Activated CD8-positive, alpha-beta T cell treated with anti-CD3 and anti-CD28 coated beads for 36 hours (primary cell): ENCODE measurements at regions of chr12 and their contacts with region 1.

Region 1: DNA sequence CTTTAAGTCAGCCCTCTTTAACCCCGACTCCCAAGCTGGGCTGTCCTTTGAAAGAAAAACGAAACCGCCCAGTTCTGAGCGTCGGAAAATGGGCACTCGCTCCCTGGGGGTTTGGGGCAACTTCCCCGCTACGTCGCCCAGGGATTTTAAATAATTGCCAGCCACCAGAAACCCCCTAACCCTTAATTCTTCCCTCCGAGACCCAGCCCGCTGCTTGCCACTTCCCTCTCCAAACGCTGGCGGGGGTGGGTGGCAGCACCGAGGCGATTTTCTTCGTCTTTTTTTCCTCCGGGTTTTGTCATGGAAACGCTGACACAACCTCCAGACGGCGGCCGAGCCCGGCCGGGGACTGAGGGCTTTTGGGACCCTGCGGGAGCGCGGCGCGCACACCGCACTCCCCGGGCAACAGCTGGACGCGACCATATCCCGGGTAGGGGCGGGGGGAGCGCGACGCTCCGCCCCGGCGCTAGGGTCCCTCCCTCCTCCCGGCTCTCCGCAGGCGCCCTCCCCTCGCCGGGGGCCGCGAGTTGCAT is at the start of gene CHST11:
- DNase-seq: peak; percentile 89
- ATAC-seq: peak; percentile 83
- H3K4me3 Mint-ChIP-seq: peak within 1 kb of the TSS; percentile 83
- H3K27ac Mint-ChIP-seq: peak within 1 kb of the TSS; percentile 97
- H3K4me1 Mint-ChIP-seq: peaks cover 40% of the 10 kb centered on the region
- H3K27me3 Mint-ChIP-seq: no peaks in the 10 kb centered on the region
- CTCF ChIP-seq: peak; percentile 20
- total RNA-seq, gene CHST11: 30.9 to 33.9 TPM

Region 2: DNA sequence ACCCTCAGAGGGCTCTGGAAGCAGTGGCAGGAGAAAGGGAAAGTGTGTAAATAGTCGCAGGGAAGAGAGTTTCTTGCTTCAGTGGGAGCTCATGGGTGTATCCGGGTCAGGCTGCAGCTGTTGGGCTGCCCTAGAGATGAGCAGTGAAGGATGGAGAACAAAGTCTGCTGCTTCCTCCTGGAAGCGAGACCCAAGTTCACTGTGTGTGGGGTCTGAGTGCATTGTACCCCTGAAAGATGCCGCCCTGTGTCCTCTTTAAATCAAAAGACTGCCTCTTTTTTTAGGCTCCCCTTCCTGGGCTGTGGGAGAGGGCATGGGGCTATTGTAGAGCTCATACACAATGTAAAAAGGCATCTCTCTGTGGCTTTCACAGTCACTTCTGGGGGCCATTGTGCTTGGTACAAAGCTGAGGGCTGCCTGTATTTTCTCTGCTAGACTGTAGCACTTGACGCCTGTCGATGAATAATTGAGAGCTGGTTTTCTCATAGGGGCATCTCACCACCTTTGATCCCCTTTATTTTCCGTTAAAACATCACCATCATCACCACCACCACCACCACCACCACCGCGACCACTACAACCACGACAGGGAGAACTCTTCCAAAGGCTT is 17.0 kb after region 1 on chr12:
- CTCF ChIA-PET with region 1: interaction called, 28 read pairs
- POLR2A ChIA-PET with region 1: interaction called, 30 read pairs
- intact Hi-C with region 1: no loop called
- DNase-seq: peak; percentile 48
- ATAC-seq: peak; percentile 57
- H3K4me3 Mint-ChIP-seq: peak overlapping the region; percentile 52
- H3K27ac Mint-ChIP-seq: peak overlapping the region; percentile 74
- H3K4me1 Mint-ChIP-seq: peaks cover 81% of the 10 kb centered on the region
- H3K27me3 Mint-ChIP-seq: no peaks in the 10 kb centered on the region
- CTCF ChIP-seq: no peak

Region 3: GRCh38 chr12:104478396-104479122 is 22.1 kb after region 1 on chr12:
- CTCF ChIA-PET with region 1: interaction called, 28 read pairs
- POLR2A ChIA-PET with region 1: interaction called, 30 read pairs
- intact Hi-C with region 1: no loop called
- DNase-seq: no peak
- ATAC-seq: peak; percentile 70
- H3K4me3 Mint-ChIP-seq: peak overlapping the region; percentile 70
- H3K27ac Mint-ChIP-seq: peak overlapping the region; percentile 95
- H3K4me1 Mint-ChIP-seq: peaks cover 84% of the 10 kb centered on the region
- H3K27me3 Mint-ChIP-seq: no peaks in the 10 kb centered on the region
- CTCF ChIP-seq: no peak

Region 4: GRCh38 chr12:104494137-104494792 is 37.8 kb after region 1 on chr12:
- CTCF ChIA-PET with region 1: interaction called, 7 read pairs
- POLR2A ChIA-PET with region 1: interaction called, 21 read pairs
- intact Hi-C with region 1: loop called (anchors 5 kb)
- DNase-seq: peak; percentile 89
- ATAC-seq: peak; percentile 70
- H3K4me3 Mint-ChIP-seq: peak overlapping the region; percentile 63
- H3K27ac Mint-ChIP-seq: peak overlapping the region; percentile 84
- H3K4me1 Mint-ChIP-seq: peaks cover 83% of the 10 kb centered on the region
- H3K27me3 Mint-ChIP-seq: no peaks in the 10 kb centered on the region
- CTCF ChIP-seq: no peak

Region 5: GRCh38 chr12:104569346-104570173 is 113.1 kb after region 1 on chr12:
- CTCF ChIA-PET with region 1: interaction called, 17 read pairs
- POLR2A ChIA-PET with region 1: no interaction called
- intact Hi-C with region 1: loop called (anchors 2 kb)
- DNase-seq: peak; percentile 86
- ATAC-seq: peak; percentile 83
- H3K4me3 Mint-ChIP-seq: peak overlapping the region; percentile 54
- H3K27ac Mint-ChIP-seq: peak overlapping the region; percentile 81
- H3K4me1 Mint-ChIP-seq: peaks cover 53% of the 10 kb centered on the region
- H3K27me3 Mint-ChIP-seq: no peaks in the 10 kb centered on the region
- CTCF ChIP-seq: no peak

Region 6: DNA sequence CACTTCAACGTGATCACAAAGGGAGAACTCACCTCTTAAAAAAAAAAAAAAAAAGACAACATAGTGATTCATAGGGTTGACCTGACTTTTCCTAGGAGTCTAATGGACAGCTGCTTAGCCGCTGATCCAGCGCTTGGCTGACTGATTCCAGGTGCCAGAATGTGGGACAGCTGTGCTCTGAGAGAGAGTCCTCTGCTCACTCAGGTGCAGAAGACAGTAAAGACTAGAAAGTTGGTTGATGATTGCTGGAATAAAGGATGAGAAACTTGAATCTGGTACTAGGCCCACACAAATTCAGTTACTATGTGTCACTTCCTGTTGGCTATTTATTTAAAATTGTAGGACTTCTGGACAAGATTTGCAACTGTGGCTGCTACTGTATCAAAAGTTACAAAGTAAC is 229.7 kb after region 1 on chr12:
- CTCF ChIA-PET with region 1: no interaction called
- POLR2A ChIA-PET with region 1: no interaction called
- intact Hi-C with region 1: loop called (anchors 5 kb)
- DNase-seq: peak; percentile 13
- ATAC-seq: no peak
- H3K4me3 Mint-ChIP-seq: no peak overlapping the region
- H3K27ac Mint-ChIP-seq: peak overlapping the region; percentile 81
- H3K4me1 Mint-ChIP-seq: peaks cover 69% of the 10 kb centered on the region
- H3K27me3 Mint-ChIP-seq: no peaks in the 10 kb centered on the region
- CTCF ChIP-seq: no peak